Activated CD4-positive, alpha-beta T cell treated with anti-CD3 and anti-CD28 coated beads, Interleukin-2, amount 10 ng/mL, durations not matched to agents 7 days and 5 days (primary cell): ENCODE measurements at regions of chr13 and their contacts with region 1.

Region 1: GRCh38 chr13:31909864-31910551 is 121.6 kb upstream of the FRY start:
- DNase-seq: peak; percentile 75
- H3K4me3 Mint-ChIP-seq: no peak overlapping the region
- H3K27ac Mint-ChIP-seq: no peak overlapping the region
- H3K4me1 Mint-ChIP-seq: peaks cover 27% of the 10 kb centered on the region
- H3K27me3 Mint-ChIP-seq: peaks cover 30% of the 10 kb centered on the region

Region 2: GRCh38 chr13:31887286-31887685 is 22.7 kb before region 1 on chr13:
- CTCF ChIA-PET with region 1: no interaction called
- POLR2A ChIA-PET with region 1: no interaction called
- DNase-seq: no peak
- H3K4me3 Mint-ChIP-seq: no peak overlapping the region
- H3K27ac Mint-ChIP-seq: no peak overlapping the region
- H3K4me1 Mint-ChIP-seq: no peaks in the 10 kb centered on the region
- H3K27me3 Mint-ChIP-seq: peaks cover 10% of the 10 kb centered on the region

Region 3: GRCh38 chr13:31919971-31920726 is 10.1 kb after region 1 on chr13:
- CTCF ChIA-PET with region 1: interaction called, 22 read pairs
- POLR2A ChIA-PET with region 1: no interaction called
- DNase-seq: no peak
- H3K4me3 Mint-ChIP-seq: no peak overlapping the region
- H3K27ac Mint-ChIP-seq: no peak overlapping the region
- H3K4me1 Mint-ChIP-seq: peaks cover 9% of the 10 kb centered on the region
- H3K27me3 Mint-ChIP-seq: peaks cover 9% of the 10 kb centered on the region

Region 4: DNA sequence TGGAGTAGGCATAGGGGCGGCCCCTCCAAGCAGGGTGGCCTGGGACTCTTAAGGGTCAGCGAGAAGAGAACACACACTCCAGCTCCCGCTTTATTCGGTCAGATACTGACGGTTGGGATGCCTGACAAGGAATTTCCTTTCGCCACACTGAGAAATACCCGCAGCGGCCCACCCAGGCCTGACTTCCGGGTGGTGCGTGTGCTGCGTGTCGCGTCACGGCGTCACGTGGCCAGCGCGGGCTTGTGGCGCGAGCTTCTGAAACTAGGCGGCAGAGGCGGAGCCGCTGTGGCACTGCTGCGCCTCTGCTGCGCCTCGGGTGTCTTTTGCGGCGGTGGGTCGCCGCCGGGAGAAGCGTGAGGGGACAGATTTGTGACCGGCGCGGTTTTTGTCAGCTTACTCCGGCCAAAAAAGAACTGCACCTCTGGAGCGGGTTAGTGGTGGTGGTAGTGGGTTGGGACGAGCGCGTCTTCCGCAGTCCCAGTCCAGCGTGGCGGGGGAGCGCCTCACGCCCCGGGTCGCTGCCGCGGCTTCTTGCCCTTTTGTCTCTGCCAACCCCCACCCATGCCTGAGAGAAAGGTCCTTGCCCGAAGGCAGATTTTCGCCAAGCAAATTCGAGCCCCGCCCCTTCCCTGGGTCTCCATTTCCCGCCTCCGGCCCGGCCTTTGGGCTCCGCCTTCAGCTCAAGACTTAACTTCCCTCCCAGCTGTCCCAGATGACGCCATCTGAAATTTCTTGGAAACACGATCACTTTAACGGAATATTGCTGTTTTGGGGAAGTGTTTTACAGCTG is 405.4 kb after region 1 on chr13 and contains the starts of genes BRCA2 and ZAR1L:
- CTCF ChIA-PET with region 1: interaction called, 11 read pairs
- POLR2A ChIA-PET with region 1: no interaction called
- DNase-seq: peak; percentile 91
- H3K4me3 Mint-ChIP-seq: peak within 1 kb of the TSS; percentile 89
- H3K27ac Mint-ChIP-seq: peak within 1 kb of the TSS; percentile 100
- H3K4me1 Mint-ChIP-seq: peaks cover 44% of the 10 kb centered on the region
- H3K27me3 Mint-ChIP-seq: no peaks in the 10 kb centered on the region
- total RNA-seq, gene BRCA2: 26.3 to 33.5 TPM
- total RNA-seq, gene ZAR1L: not detected

Region 5: GRCh38 chr13:32824671-32825070 is 914.7 kb after region 1 on chr13:
- CTCF ChIA-PET with region 1: no interaction called
- POLR2A ChIA-PET with region 1: no interaction called
- DNase-seq: no peak
- H3K4me3 Mint-ChIP-seq: no peak overlapping the region
- H3K27ac Mint-ChIP-seq: no peak overlapping the region
- H3K4me1 Mint-ChIP-seq: no peaks in the 10 kb centered on the region
- H3K27me3 Mint-ChIP-seq: peaks cover 4% of the 10 kb centered on the region